ENCODE measurements at regions of chrX and their contacts with region 1.

Region 1: GRCh38 chrX:14029425-14030173 is at the start of gene GEMIN8:
- DNase-seq: peak; percentile 95
- H3K4me3 Mint-ChIP-seq: peak within 1 kb of the TSS; percentile 77
- H3K27ac Mint-ChIP-seq: peak within 1 kb of the TSS; percentile 86
- H3K4me1 Mint-ChIP-seq: peaks cover 31% of the 10 kb centered on the region
- H3K27me3 Mint-ChIP-seq: peaks cover 13% of the 10 kb centered on the region
- CTCF ChIP-seq: no peak
- total RNA-seq, gene GEMIN8: 24.6 and 28.2 TPM in 2 replicates

Region 2: GRCh38 chrX:13506574-13506973 is 523.0 kb before region 1 on chrX:
- CTCF ChIA-PET with region 1: interaction called, 20 read pairs
- POLR2A ChIA-PET with region 1: interaction called, 3 read pairs
- intact Hi-C with region 1: loop called (anchors 1 kb)
- DNase-seq: peak; percentile 65
- H3K4me3 Mint-ChIP-seq: no peak overlapping the region
- H3K27ac Mint-ChIP-seq: no peak overlapping the region
- H3K4me1 Mint-ChIP-seq: no peaks in the 10 kb centered on the region
- H3K27me3 Mint-ChIP-seq: peaks cover 45% of the 10 kb centered on the region
- CTCF ChIP-seq: peak; percentile 81

Region 3: DNA sequence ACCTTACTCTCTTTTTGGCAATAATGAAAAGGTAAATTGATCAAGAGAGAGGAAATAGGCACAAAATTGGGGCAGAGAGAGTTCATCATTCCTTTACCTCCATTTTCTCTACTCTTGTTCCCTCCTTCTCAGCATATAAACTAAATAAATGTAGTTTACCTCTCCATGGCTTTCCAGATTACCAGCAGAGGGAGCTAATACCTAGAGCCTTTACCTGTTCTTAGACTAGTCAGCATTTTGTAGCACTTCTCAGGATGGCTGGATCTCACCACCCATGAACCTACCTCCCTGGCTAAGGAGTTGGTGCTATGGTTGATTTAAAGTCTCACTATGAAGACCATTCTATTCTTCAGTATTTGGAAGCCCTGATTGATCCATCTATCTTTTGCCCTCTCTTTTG is 279.4 kb before region 1 on chrX:
- CTCF ChIA-PET with region 1: interaction called, 30 read pairs
- POLR2A ChIA-PET with region 1: interaction called, 14 read pairs
- intact Hi-C with region 1: loop called (anchors 1 kb)
- DNase-seq: peak; percentile 77
- H3K4me3 Mint-ChIP-seq: no peak overlapping the region
- H3K27ac Mint-ChIP-seq: no peak overlapping the region
- H3K4me1 Mint-ChIP-seq: peaks cover 6% of the 10 kb centered on the region
- H3K27me3 Mint-ChIP-seq: no peaks in the 10 kb centered on the region
- CTCF ChIP-seq: peak; percentile 62

Region 4: DNA sequence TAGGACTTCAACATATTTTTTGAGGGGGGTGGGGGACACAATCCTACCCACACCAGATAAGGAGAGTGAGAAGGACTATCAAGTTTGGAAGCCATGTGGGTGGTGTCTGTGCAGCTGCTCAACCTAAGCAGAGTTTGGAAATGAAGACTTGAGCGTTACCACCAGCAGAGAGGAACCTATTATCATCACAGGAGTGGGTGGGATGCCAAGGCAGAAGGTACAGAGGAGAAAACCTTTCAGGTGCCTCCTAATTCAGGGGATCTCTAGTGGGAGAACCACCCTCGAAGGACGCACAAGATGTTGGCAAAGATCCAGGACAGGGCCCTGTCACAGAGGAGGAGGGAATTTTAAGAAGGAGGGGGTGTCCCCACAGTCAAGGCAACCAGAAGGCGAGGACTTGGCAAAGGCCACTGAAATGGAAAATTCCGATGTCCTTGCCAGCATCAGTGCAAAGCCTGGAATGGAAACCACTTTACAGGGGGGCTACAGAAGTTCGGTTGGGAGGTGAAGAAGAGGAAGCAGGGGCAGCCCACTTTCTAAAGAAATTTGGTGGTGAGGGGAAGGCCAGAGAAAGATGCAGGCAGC is 204.3 kb before region 1 on chrX:
- CTCF ChIA-PET with region 1: interaction called, 5 read pairs
- POLR2A ChIA-PET with region 1: interaction called, 26 read pairs
- intact Hi-C with region 1: no loop called
- DNase-seq: no peak
- H3K4me3 Mint-ChIP-seq: no peak overlapping the region
- H3K27ac Mint-ChIP-seq: no peak overlapping the region
- H3K4me1 Mint-ChIP-seq: peaks cover 31% of the 10 kb centered on the region
- H3K27me3 Mint-ChIP-seq: peaks cover 55% of the 10 kb centered on the region
- CTCF ChIP-seq: no peak

Region 5: DNA sequence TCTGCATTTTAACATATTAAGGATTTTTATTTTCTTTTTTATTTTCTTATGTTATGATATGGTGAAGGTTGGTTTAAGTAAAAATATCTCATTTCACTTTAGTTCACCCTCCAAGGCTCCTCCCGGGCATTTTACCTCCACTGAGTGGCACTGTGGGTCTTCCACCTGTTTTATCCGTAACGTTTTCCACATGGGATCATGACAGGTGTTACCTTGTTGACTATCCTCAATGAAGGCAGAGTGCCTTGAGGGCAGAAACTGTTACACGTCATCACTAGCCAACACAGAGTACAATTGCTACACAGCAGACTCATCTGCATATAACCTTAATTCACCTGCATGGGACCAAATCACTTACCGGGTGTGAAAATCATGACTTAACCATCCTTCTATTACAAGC is 105.8 kb before region 1 on chrX:
- CTCF ChIA-PET with region 1: interaction called, 14 read pairs
- POLR2A ChIA-PET with region 1: interaction called, 36 read pairs
- intact Hi-C with region 1: loop called (anchors 1 kb)
- DNase-seq: peak; percentile 95
- H3K4me3 Mint-ChIP-seq: no peak overlapping the region
- H3K27ac Mint-ChIP-seq: no peak overlapping the region
- H3K4me1 Mint-ChIP-seq: no peaks in the 10 kb centered on the region
- H3K27me3 Mint-ChIP-seq: peaks cover 48% of the 10 kb centered on the region
- CTCF ChIP-seq: peak; percentile 27

Region 6: DNA sequence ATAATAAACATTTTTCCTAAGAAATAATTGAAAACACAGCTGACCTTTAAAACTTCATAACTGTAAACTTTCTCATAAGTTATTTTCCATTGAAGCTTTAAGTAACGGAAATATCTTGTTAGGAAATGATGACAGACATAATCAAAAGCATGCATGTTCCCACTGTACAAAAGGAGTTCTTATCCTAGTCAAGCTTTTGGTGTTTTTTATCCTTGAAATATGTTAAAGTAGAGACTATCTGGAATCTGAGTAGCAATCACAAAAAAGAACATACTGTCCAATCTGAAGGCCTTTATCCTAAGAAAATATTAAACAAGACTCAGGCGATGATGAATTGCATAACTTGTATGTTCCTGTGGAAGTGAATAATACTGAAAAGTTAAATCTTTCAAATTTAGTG is 14.3 kb before region 1 on chrX:
- CTCF ChIA-PET with region 1: interaction called, 3 read pairs
- POLR2A ChIA-PET with region 1: interaction called, 17 read pairs
- intact Hi-C with region 1: no loop called
- DNase-seq: no peak
- H3K4me3 Mint-ChIP-seq: no peak overlapping the region
- H3K27ac Mint-ChIP-seq: no peak overlapping the region
- H3K4me1 Mint-ChIP-seq: peaks cover 8% of the 10 kb centered on the region
- H3K27me3 Mint-ChIP-seq: no peaks in the 10 kb centered on the region
- CTCF ChIP-seq: no peak

Region 7: DNA sequence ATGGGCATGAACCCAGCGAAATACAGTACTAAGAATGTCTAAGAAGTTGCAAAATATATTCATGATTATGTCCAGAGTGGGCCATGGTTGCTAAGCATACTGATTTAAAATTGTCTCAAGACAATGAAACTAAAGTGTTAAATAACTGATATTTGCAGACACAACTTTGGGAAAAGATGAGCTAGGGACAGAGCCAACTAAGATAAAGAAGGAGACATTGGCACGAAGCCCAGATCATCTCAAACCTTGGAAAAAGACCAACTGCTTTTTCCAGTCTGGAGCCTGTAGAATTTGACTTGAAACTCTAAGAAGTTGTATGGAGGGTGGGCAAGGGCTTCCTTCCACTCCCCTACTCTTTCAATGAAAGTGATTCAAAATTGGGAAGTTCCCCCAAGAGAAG is 391.2 kb after region 1 on chrX:
- CTCF ChIA-PET with region 1: no interaction called
- POLR2A ChIA-PET with region 1: no interaction called
- intact Hi-C with region 1: no loop called
- DNase-seq: no peak
- H3K4me3 Mint-ChIP-seq: no peak overlapping the region
- H3K27ac Mint-ChIP-seq: no peak overlapping the region
- H3K4me1 Mint-ChIP-seq: no peaks in the 10 kb centered on the region
- H3K27me3 Mint-ChIP-seq: peaks cover 34% of the 10 kb centered on the region
- CTCF ChIP-seq: no peak

Region 8: DNA sequence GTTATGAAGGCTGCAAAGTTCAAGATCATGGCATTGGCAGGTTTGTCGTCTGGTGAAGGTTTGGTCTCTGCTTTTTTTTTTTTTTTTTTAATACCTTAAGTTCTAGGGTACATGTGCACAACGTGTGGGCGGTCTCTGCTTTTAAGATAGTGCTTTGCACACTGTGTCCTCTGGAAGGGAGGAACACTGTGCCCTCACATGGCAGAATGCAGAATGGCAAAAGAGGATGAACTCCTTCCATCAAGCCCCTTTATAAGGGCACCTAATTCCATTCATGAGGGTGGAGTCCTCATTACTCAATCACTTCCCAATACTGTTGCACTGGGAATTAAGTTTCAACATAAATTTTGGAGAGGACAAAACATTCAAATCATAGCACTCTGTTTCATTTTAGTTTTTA is 601.1 kb after region 1 on chrX:
- CTCF ChIA-PET with region 1: no interaction called
- POLR2A ChIA-PET with region 1: no interaction called
- intact Hi-C with region 1: no loop called
- DNase-seq: peak; percentile 5
- H3K4me3 Mint-ChIP-seq: no peak overlapping the region
- H3K27ac Mint-ChIP-seq: no peak overlapping the region
- H3K4me1 Mint-ChIP-seq: no peaks in the 10 kb centered on the region
- H3K27me3 Mint-ChIP-seq: peaks cover 42% of the 10 kb centered on the region
- CTCF ChIP-seq: no peak

Measured in MCF 10A (cell line).